Activated T-helper 1 cell treated with anti-CD3 and anti-CD28 coated beads, Interleukin-12 subunit alpha, Interleukin-12 subunit beta, Interleukin-2, Interleukin-4 antibody, amounts not matched to agents 30 ng/mL and 10 ng/mL and 1 ng/mL, durations not matched to agents 14 hours and 24 hours and 36 hours (primary cell): ENCODE measurements at regions of chr10 and their contacts with region 1.

Region 1: DNA sequence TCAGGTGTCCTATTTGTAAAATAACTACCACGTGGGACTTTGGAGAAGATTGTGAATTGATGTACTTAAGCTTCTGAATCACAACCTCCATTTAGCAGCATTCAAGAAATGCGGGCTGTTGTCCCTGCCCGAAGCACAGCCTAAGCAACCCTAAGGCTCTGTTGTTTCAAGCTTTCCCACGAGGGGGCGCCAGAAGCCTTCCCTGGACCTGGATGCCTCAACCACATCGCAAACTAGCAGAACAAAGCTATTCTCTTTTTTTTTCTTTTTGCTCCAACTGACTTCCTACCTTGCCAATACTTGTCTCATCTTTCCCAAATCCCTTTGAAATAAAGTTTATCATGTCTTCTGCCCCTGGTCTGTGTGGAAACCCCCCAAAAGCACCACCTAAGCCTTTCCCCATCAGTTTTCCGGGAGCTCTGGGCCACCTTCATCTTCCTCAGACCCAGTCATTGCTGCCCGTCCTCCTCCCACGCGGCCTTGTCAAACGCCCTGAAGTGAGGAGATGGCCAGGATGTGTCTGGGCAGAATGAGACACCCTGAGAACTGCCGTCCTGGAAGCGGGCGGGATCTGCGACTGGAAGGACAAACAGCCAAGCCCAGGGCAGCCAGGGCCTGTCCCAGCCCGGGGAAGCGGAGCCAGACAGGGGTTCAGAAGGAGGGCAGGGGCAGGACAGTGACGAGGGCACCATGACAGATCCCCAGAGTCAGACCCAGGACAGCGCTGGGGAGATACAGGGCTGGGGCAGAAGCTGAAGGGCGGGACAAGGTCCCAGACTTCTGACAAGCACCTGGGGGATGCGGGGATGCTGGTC is 112.7 kb downstream of the SLIT1 start:
- DNase-seq: peak; percentile 61
- H3K4me3 Mint-ChIP-seq: no peak overlapping the region
- H3K27ac Mint-ChIP-seq: no peak overlapping the region
- H3K4me1 Mint-ChIP-seq: peaks cover 8% of the 10 kb centered on the region
- H3K27me3 Mint-ChIP-seq: peaks cover 10% of the 10 kb centered on the region

Region 2: GRCh38 chr10:97117372-97117771 is 44.3 kb after region 1 on chr10:
- intact Hi-C with region 1: loop called (anchors 1 kb)
- DNase-seq: no peak
- H3K4me3 Mint-ChIP-seq: no peak overlapping the region
- H3K27ac Mint-ChIP-seq: no peak overlapping the region
- H3K4me1 Mint-ChIP-seq: no peaks in the 10 kb centered on the region
- H3K27me3 Mint-ChIP-seq: peaks cover 8% of the 10 kb centered on the region